ENCODE measurements at regions of chr18 and their contacts with region 1.

Region 1: GRCh38 chr18:7755753-7756475 is 188.8 kb downstream of the PTPRM start:
- DNase-seq: no peak
- ATAC-seq: peak; percentile 63 to 77
- H3K4me3 ChIP-seq: no peak overlapping the region
- H3K27ac ChIP-seq: no peak overlapping the region
- H3K4me1 ChIP-seq: peaks cover 15% of the 10 kb centered on the region
- H3K27me3 ChIP-seq: no peaks in the 10 kb centered on the region

Region 2: DNA sequence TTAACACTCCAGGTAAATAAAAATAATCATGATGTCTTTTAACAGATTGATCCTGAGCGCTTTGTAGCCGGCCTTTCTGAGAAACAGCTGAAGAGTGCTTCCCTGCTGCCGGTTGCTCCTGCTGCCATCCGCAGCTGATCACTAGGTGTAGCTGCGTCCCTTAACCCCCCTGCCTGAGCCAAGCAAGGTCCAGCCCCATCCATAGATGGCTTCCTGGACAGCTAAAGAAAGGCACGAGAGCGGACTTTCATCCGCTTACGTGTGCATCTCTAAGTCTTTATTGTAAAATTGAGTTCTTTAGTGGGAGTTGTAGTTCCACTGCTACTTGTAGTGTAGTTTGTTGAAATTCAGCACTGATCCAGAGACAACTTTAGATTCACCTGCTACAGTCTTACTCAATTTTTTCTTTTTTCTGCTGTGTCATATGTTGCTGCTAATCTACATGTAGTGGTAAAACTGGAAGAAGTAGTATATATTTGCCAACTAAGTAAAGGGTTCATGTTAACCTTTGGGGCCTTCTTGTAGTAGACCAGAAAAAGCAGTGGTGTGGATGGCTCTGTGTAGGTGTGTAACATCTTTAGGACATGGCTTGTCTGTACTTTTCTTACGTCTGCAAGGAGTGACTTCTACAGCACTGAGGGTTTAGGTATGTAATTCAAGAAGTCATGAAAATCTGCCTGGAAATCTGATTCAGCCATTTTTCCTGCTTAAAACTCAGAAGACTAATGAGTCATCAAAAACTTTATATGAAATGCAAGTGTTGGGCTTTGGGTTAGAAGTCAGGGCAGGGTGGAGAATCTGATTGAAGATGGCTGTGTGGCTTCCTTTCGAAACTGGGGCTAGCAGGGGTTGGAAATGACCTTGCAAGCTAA is 180.5 kb before region 1 on chr18:
- intact Hi-C with region 1: loop called in 1 of 4 experiments (anchors 10 kb)
- DNase-seq: no peak
- ATAC-seq: peak; percentile 36 to 57
- H3K4me3 ChIP-seq: no peak overlapping the region
- H3K27ac ChIP-seq: no peak overlapping the region
- H3K4me1 ChIP-seq: peaks cover 6% of the 10 kb centered on the region
- H3K27me3 ChIP-seq: no peaks in the 10 kb centered on the region

Region 3: GRCh38 chr18:8153887-8154583 is 398.1 kb after region 1 on chr18:
- intact Hi-C with region 1: no loop called
- DNase-seq: no peak
- ATAC-seq: peak; percentile 66 to 78
- H3K4me3 ChIP-seq: no peak overlapping the region
- H3K27ac ChIP-seq: no peak overlapping the region
- H3K4me1 ChIP-seq: no peaks in the 10 kb centered on the region
- H3K27me3 ChIP-seq: no peaks in the 10 kb centered on the region